ENCODE measurements at regions of chr1 and their contacts with region 1.

Region 1: DNA sequence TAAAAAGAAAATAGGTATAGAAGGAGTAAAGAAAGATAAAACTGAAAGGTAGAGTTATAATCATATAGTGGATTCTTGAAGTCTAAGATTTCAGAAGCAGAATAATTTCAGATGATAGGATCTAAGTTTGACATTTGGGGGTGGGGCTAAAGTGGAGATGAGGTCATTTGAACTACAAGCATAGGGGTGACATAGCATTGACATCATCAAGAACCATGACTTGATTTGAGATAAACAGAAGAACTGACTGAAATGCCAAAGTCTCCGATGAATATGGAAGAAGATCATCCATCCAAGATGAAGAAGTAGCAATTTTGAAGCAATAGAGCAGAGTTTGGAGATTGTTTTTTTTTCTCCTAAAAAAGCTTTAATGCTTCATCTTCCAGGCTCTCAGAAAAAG is 122.3 kb downstream of the MACF1 start:
- DNase-seq: no peak
- ATAC-seq: no peak

Region 2: GRCh38 chr1:39434797-39435395 is 108.1 kb after region 1 on chr1:
- intact Hi-C with region 1: no loop called
- DNase-seq: no peak
- ATAC-seq: peak; percentile 96

Region 3: DNA sequence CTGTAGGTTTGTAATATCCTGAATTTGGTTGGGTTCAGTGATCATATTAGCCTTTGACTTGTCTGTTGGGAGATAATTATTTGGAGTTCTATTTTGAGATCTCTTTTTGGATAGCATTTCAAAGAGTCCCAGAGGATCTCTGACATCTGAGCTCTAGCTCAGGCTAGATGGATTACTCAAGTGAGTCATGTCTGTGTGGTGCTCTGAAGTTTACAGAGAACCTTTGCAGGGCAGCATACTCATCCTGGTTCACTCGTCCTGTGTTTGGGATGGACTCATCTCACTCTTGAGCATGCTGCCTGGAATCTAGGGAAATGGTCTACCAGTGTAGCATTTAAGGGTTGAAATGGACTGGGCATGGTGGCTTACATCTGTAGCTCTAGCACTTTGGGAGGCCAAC is 135.2 kb after region 1 on chr1:
- intact Hi-C with region 1: loop called (anchors 10 kb)
- DNase-seq: no peak
- ATAC-seq: no peak

Measured in left ventricle myocardium superior (tissue), 1 donor.